ENCODE measurements at regions of chr6 and their contacts with region 1.

Region 1: DNA sequence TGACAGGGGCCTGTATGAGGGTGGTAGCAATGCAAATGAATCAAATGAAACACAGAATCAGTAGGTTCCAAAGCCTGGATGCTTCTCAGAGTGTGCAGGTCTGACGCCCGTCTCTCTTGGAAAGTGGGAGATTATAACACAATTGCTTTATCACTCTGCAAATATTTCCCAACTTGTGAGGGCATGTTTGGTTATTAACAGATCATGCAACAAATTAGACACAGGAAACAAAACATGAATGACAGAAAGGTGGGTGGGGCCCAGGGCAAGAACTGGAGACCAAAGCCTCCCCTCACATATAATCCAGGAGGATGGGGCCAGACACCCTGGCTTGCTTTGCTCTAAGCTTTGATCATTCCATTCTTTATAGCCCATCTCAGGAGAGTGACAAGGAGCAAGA is 108.6 kb upstream of the MRPS10 start:
- DNase-seq: peak; percentile 80
- H3K4me3 Mint-ChIP-seq: no peak overlapping the region
- H3K27ac Mint-ChIP-seq: peak overlapping the region; percentile 66
- H3K4me1 Mint-ChIP-seq: peaks cover 29% of the 10 kb centered on the region
- H3K27me3 Mint-ChIP-seq: no peaks in the 10 kb centered on the region
- CTCF ChIP-seq: no peak

Region 2: GRCh38 chr6:42315991-42316378 is 10.3 kb before region 1 on chr6:
- CTCF ChIA-PET with region 1: interaction called, 3 read pairs
- POLR2A ChIA-PET with region 1: interaction called, 6 read pairs
- intact Hi-C with region 1: loop called (anchors 1 kb)
- DNase-seq: peak; percentile 93
- H3K4me3 Mint-ChIP-seq: no peak overlapping the region
- H3K27ac Mint-ChIP-seq: peak overlapping the region; percentile 29
- H3K4me1 Mint-ChIP-seq: peaks cover 46% of the 10 kb centered on the region
- H3K27me3 Mint-ChIP-seq: no peaks in the 10 kb centered on the region
- CTCF ChIP-seq: no peak

Region 3: DNA sequence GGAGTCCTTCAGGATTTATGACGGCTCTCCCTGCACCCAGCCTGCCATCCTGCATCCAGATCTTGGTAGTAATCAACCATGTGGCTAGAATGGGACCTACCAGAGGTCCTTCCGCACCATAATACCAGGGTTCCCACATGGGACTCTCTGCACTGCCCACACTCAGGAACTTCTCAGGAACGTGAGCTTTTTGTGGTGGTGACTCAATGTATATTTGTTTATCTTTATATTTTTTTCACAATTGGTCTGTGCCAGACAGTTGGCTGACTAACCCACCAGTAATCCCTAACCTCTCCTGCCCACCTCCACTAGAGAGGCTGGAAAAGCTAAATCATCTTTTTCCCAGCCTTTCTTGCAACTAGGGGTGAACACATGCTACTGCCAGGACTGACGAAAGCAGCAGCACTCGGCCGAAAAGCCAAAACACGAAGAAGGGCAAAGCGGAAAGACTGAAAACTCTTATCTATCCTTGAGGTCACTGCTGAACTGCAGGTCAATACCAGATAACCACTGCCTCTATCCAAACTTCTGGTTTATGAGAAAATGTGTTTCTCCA is 12.5 kb after region 1 on chr6:
- CTCF ChIA-PET with region 1: interaction called, 10 read pairs
- POLR2A ChIA-PET with region 1: interaction called, 27 read pairs
- intact Hi-C with region 1: no loop called
- DNase-seq: peak; percentile 97
- H3K4me3 Mint-ChIP-seq: peak overlapping the region; percentile 61
- H3K27ac Mint-ChIP-seq: peak overlapping the region; percentile 55
- H3K4me1 Mint-ChIP-seq: peaks cover 52% of the 10 kb centered on the region
- H3K27me3 Mint-ChIP-seq: no peaks in the 10 kb centered on the region
- CTCF ChIP-seq: no peak